AG04449 (cell line): ENCODE measurements at regions of chr12 and their contacts with region 1.

Region 1: GRCh38 chr12:122356192-122356635 is 66.3 kb downstream of the CLIP1 start:
- DNase-seq: no peak
- H3K4me3 ChIP-seq: no peak overlapping the region
- CTCF ChIP-seq: peak; percentile 56

Region 2: DNA sequence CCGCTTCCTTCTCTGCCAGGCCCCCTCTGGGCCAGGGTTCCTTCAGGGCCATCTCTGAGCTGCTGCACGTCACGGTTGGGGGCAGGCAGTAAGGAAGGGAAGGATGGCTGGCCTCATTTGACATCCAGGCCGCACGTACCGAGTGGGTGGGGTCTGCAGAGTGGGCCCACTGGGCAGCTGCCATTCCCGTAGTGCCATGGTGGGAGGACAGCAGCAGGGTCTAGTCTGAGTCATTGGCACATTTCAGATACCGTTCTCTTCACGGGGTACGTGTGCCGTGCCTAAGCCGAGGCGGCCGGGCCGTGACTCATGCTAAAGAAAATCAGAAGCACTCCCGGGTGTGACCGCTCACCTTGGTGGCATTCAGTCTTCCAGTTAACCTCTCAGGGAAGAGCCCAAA is 226.1 kb before region 1 on chr12:
- CTCF ChIA-PET with region 1: interaction called, 16 read pairs
- POLR2A ChIA-PET with region 1: no interaction called
- DNase-seq: no peak
- H3K4me3 ChIP-seq: no peak overlapping the region
- CTCF ChIP-seq: no peak

Region 3: DNA sequence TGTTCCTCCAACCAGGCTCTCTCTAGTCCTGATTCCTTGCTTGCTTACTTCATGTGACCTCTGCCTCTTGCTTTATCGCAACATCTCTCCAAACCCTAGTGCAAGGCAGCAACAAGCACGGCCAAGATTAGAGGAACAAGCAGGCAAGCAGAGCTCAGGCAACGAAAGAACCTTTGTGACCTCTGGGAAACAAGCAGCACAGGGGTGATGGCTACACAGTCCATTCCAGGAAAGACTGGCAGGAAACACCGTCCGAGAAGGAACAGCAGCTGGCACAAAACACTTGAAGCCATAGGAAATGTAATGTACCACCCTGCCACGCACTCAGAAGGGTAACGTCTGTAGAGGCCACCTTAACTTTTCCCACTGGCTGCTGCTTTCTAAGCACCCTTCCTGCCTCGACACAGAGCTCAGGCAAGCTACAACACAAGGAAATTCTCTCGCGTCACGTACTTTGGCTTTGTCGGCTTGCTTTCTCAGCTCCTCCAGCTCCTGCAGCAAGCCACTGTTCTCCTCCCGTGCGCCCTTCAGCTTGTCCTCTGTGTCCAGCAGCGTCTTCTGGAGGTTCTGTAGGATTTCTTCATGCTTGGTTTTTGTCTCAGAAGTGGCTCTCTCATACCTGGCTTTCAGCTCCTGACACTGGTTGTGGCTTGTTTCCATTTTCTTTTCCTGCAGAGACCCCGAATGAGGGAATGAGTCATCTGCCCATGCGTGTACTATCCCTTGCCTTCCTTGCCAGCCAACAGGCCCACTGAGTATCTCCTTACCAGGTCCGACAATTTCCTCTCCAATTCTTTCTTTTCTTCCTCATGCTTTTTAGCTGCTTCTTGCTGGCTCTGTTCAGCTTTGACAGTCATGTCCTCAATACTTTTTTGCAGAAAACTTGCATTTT is 28.5 kb before region 1 on chr12:
- CTCF ChIA-PET with region 1: interaction called, 31 read pairs
- POLR2A ChIA-PET with region 1: interaction called, 4 read pairs
- DNase-seq: no peak
- H3K4me3 ChIP-seq: no peak overlapping the region
- CTCF ChIP-seq: no peak

Region 4: GRCh38 chr12:122345042-122345441 is 11.2 kb before region 1 on chr12:
- CTCF ChIA-PET with region 1: interaction called, 39 read pairs
- POLR2A ChIA-PET with region 1: no interaction called
- DNase-seq: no peak
- H3K4me3 ChIP-seq: no peak overlapping the region
- CTCF ChIP-seq: no peak

Region 5: DNA sequence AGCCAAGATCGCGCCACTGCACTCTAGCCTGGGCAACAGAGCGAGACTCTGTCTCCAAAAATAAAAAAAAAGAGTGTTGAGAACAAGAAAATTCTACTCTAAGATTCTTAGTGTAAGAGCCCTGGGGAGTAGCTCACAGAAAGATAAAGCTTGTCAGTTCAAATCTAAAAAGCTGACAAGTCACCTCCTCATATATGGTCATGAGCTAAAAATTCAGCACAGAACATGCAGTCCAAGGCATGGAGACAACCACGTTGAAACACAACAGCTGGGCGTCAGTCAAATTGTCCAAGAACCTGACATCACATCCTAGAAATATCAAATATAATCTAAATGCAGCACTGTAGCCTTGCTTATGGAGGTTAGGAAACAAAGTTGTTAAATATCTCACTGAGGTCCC is 18.5 kb after region 1 on chr12:
- CTCF ChIA-PET with region 1: interaction called, 76 read pairs
- POLR2A ChIA-PET with region 1: interaction called, 3 read pairs
- DNase-seq: no peak
- H3K4me3 ChIP-seq: no peak overlapping the region
- CTCF ChIP-seq: no peak

Region 6: DNA sequence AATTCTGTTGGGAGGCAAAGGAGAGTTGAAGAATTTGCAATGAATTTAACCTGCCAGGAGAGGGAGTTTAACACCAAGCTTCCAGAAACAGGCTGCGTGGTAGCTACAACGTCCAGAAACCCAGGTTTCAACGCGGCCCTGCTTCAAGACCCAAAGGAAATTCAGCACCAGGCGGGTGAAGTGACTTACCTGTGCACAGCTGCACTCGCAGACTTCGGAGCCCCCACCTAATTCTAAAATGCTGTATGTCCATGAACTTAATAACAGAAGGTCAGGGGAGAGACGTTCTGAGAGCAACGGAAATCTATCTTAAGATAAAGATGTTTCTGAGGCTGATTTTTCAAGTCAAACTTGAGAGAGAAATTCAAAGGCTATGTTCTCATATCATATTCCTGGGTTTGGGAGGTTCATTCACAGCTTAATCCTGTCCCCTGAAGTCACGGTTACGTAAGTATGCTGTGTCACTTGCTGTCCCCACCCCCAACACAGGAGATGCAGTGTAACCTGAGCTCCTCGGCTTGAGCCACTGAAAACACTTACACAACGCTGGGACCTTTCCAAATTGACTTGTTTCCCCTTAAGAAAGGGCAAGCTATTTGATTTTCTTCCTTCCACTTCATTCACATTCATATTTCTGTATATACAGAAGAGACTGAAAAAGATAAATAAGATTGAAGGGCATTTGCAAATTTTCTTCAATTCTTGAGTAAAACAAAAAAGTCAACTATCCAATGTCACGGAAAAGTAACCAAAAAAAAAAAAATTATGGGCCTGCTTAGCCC is 43.6 kb after region 1 on chr12:
- CTCF ChIA-PET with region 1: interaction called, 10 read pairs
- POLR2A ChIA-PET with region 1: no interaction called
- DNase-seq: peak; percentile 79
- H3K4me3 ChIP-seq: no peak overlapping the region
- CTCF ChIP-seq: peak; percentile 50

Region 7: GRCh38 chr12:122533856-122534255 is 177.6 kb after region 1 on chr12:
- CTCF ChIA-PET with region 1: no interaction called
- POLR2A ChIA-PET with region 1: no interaction called
- DNase-seq: no peak
- H3K4me3 ChIP-seq: no peak overlapping the region
- CTCF ChIP-seq: no peak

Region 8: DNA sequence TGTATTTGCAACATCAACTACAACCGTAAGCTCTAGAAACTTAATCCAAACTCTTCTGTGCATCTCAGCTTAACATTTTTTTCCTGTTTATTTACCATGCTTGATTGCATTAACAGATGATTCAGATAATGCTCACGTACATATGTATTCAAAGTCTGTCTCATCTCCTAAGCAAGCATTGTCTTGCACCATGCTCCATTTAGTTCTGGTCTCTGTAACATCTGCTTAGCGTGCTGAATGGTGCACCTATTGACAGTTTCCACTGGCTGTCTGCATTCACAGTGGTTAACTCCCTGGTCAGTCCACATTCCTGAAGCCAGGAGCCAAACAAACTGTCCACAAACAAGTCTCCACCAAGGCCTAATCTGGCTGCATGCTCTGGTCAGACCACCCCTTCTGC is 254.7 kb after region 1 on chr12:
- CTCF ChIA-PET with region 1: no interaction called
- POLR2A ChIA-PET with region 1: no interaction called
- DNase-seq: no peak
- H3K4me3 ChIP-seq: no peak overlapping the region
- CTCF ChIP-seq: no peak